CD4-positive, alpha-beta T cell (primary cell): ENCODE measurements at regions of chr1 and their contacts with region 1.

Region 1: GRCh38 chr1:45583264-45583665 is 576 bp upstream of the NASP start:
- DNase-seq: peak; percentile 88 to 98 (median 92)
- ATAC-seq: peak; percentile 74
- H3K4me3 ChIP-seq: peak overlapping the region; percentile 95
- H3K4me3 Mint-ChIP-seq: peak overlapping the region; percentile 94
- H3K27ac ChIP-seq: peak overlapping the region; percentile 94 to 95
- H3K27ac Mint-ChIP-seq: peak overlapping the region; percentile 93
- H3K4me1 ChIP-seq: peaks cover 36% of the 10 kb centered on the region
- H3K4me1 Mint-ChIP-seq: peaks cover 36% of the 10 kb centered on the region
- H3K27me3 ChIP-seq: no peaks in the 10 kb centered on the region
- H3K27me3 Mint-ChIP-seq: no peaks in the 10 kb centered on the region
- CTCF ChIP-seq: no peak

Region 2: DNA sequence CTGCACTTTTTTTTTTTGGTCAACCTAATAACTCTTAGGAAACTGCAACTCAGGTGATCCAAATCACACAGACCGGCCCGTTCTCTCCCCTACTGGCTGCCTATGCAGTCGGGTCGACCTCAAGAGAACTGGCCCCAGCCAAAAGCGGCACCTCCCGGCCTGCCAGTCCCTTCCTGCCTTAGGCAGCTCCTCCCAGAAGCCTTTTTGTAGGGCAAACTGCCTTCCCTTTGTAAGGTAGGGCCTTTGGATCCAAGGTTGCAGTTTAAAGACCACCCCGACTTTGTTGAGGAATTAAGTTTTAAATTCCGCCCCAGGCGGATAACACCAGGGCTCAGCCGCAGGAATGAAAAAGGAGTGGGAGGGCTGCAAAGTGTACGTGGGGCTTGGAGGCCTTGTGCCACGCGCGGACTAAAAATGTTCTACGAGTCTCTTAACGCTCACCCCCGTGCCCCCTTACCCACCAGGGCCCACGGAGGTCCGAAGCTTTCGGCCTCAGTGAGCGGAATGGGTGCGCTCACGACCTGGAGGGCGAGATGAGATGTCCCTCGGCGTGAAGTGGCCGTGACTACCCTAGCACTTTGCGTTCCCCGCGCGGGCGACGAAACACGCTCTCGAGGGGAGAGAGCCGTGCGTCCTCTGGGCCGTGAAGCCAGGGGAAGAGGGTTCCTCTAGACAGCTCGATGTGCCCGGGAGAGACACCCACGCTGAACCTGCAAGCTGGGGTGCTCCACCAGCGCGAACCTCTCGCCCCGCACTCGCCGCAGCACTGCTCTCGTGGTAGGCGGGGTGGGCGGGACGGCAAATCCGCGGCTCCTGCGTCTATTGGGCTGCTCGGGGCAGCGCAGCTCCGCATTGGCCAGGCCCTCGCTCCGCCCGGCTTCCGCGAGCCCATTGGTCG is 1876.4 kb before region 1 on chr1:
- CTCF ChIA-PET with region 1: no interaction called
- POLR2A ChIA-PET with region 1: no interaction called
- intact Hi-C with region 1: loop called in 1 of 2 experiments (anchors 10 kb)
- DNase-seq: peak; percentile 82 to 95 (median 88)
- ATAC-seq: peak; percentile 99
- H3K4me3 ChIP-seq: peak overlapping the region; percentile 82
- H3K4me3 Mint-ChIP-seq: peak overlapping the region; percentile 91
- H3K27ac ChIP-seq: peak overlapping the region in 1 of 2 donors; percentile 43
- H3K27ac Mint-ChIP-seq: peak overlapping the region; percentile 73
- H3K4me1 ChIP-seq: peaks cover 19% of the 10 kb centered on the region
- H3K4me1 Mint-ChIP-seq: peaks cover 28% of the 10 kb centered on the region
- H3K27me3 ChIP-seq: no peaks in the 10 kb centered on the region
- H3K27me3 Mint-ChIP-seq: no peaks in the 10 kb centered on the region
- CTCF ChIP-seq: no peak

Region 3: GRCh38 chr1:44730741-44731512 is 852.3 kb before region 1 on chr1 and contains the start of gene RNU5D-1:
- CTCF ChIA-PET with region 1: no interaction called
- POLR2A ChIA-PET with region 1: interaction called, 4 read pairs
- intact Hi-C with region 1: loop called in 1 of 2 experiments (anchors 5 kb)
- DNase-seq: peak; percentile 87 to 98 (median 94)
- ATAC-seq: peak; percentile 76
- H3K4me3 ChIP-seq: peak within 1 kb of the TSS; percentile 46
- H3K4me3 Mint-ChIP-seq: peak within 1 kb of the TSS; percentile 68
- H3K27ac ChIP-seq: peak within 1 kb of the TSS; percentile 93 to 96
- H3K27ac Mint-ChIP-seq: peak within 1 kb of the TSS; percentile 97
- H3K4me1 ChIP-seq: peaks cover 33% of the 10 kb centered on the region
- H3K4me1 Mint-ChIP-seq: peaks cover 35% of the 10 kb centered on the region
- H3K27me3 ChIP-seq: no peaks in the 10 kb centered on the region
- H3K27me3 Mint-ChIP-seq: no peaks in the 10 kb centered on the region
- CTCF ChIP-seq: peak; percentile 77
- total RNA-seq, gene RNU5D-1: not detected

Region 4: GRCh38 chr1:45490626-45491486 is 92.4 kb before region 1 on chr1 and contains the start of gene TESK2:
- CTCF ChIA-PET with region 1: interaction called, 4 read pairs
- POLR2A ChIA-PET with region 1: interaction called, 17 read pairs
- intact Hi-C with region 1: no loop called
- DNase-seq: peak; percentile 92 to 100 (median 95)
- ATAC-seq: peak; percentile 92
- H3K4me3 ChIP-seq: peak within 1 kb of the TSS; percentile 82
- H3K4me3 Mint-ChIP-seq: no peak within 1 kb of the TSS
- H3K27ac ChIP-seq: peak within 1 kb of the TSS; percentile 55 to 70
- H3K27ac Mint-ChIP-seq: no peak within 1 kb of the TSS
- H3K4me1 ChIP-seq: peaks cover 28% of the 10 kb centered on the region
- H3K4me1 Mint-ChIP-seq: peaks cover 5% of the 10 kb centered on the region
- H3K27me3 ChIP-seq: no peaks in the 10 kb centered on the region
- H3K27me3 Mint-ChIP-seq: no peaks in the 10 kb centered on the region
- CTCF ChIP-seq: no peak
- total RNA-seq, gene TESK2: 2.8 to 3.4 TPM

Region 5: DNA sequence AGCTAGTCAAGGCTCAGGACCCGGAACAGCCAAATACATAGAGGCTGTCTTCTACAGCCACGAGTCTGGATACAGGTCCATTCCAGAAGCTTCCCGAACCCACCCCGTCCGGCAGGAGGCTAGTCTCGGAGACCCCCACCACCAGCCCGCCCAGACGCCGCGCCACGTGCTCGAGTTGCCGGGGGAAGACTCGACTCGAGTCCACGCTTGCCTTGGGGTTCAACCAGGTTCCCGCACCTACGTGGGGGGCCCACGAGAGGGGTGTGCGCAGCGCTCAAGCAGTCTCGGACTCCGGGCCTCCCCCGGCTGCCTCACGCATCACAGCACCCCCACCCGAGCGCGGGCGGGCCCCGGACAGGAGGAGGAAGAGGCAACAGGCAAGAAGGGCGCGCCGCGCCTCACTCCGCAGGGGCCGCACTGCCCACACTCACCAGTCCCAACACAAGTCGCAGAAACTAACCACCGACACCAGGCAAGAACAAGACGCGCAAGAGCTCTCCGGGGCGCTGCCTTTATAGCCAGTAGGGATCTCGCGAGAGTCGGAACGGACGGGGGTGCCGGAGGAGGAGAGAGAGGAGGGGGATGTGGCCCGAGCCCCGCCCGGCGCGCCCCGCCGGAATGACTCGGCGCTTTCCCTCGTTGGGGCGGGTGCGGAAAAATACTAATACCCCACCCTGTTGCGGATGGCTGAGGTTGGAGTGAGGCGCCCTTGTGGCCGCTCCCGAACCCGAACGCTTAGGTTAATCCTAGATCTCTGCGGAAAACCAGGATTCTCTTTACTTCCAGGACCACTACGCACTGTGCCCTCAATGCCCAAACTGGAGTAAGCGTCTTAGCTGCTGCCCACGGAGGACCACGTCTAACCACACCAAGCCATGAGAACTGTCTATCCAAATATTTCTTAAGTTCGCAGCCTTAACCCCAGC is 61.6 kb before region 1 on chr1 and contains the start of gene PRDX1:
- CTCF ChIA-PET with region 1: interaction called, 4 read pairs
- POLR2A ChIA-PET with region 1: interaction called, 23 read pairs
- intact Hi-C with region 1: loop called in 1 of 2 experiments (anchors 2 kb)
- DNase-seq: peak; percentile 93 to 97 (median 96)
- ATAC-seq: peak; percentile 90
- H3K4me3 ChIP-seq: peak within 1 kb of the TSS; percentile 90
- H3K4me3 Mint-ChIP-seq: peak within 1 kb of the TSS; percentile 97
- H3K27ac ChIP-seq: peak within 1 kb of the TSS; percentile 61 to 65
- H3K27ac Mint-ChIP-seq: peak within 1 kb of the TSS; percentile 86
- H3K4me1 ChIP-seq: peaks cover 36% of the 10 kb centered on the region
- H3K4me1 Mint-ChIP-seq: peaks cover 30% of the 10 kb centered on the region
- H3K27me3 ChIP-seq: no peaks in the 10 kb centered on the region
- H3K27me3 Mint-ChIP-seq: no peaks in the 10 kb centered on the region
- CTCF ChIP-seq: no peak
- total RNA-seq, gene PRDX1: 18.1 to 24.1 TPM

Region 6: DNA sequence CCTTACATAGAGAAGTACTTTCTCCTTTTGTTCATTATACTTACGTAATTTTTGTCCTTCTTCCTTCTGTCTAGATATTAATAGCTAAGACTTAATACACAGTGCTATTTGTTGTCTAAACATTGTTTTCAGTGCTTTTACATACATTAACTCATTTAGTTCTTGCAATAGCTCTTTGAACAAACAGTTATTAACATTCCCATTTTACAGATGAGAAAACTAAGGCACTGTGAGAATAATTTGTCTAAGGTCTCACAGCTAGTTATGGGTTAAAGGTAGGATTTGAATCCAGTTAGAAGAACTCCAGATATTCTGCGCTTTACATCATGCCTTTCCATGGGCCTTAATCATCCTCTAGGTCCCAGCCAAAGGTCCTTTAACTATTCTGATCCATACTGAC is 21.0 kb after region 1 on chr1:
- CTCF ChIA-PET with region 1: interaction called, 3 read pairs
- POLR2A ChIA-PET with region 1: no interaction called
- intact Hi-C with region 1: loop called in 1 of 2 experiments (anchors 2 kb)
- DNase-seq: no peak
- ATAC-seq: no peak
- H3K4me3 ChIP-seq: no peak overlapping the region
- H3K4me3 Mint-ChIP-seq: no peak overlapping the region
- H3K27ac ChIP-seq: no peak overlapping the region
- H3K27ac Mint-ChIP-seq: peak overlapping the region; percentile 42
- H3K4me1 ChIP-seq: peaks cover 3% of the 10 kb centered on the region
- H3K4me1 Mint-ChIP-seq: peaks cover 60% of the 10 kb centered on the region
- H3K27me3 ChIP-seq: no peaks in the 10 kb centered on the region
- H3K27me3 Mint-ChIP-seq: no peaks in the 10 kb centered on the region
- CTCF ChIP-seq: no peak

Region 7: DNA sequence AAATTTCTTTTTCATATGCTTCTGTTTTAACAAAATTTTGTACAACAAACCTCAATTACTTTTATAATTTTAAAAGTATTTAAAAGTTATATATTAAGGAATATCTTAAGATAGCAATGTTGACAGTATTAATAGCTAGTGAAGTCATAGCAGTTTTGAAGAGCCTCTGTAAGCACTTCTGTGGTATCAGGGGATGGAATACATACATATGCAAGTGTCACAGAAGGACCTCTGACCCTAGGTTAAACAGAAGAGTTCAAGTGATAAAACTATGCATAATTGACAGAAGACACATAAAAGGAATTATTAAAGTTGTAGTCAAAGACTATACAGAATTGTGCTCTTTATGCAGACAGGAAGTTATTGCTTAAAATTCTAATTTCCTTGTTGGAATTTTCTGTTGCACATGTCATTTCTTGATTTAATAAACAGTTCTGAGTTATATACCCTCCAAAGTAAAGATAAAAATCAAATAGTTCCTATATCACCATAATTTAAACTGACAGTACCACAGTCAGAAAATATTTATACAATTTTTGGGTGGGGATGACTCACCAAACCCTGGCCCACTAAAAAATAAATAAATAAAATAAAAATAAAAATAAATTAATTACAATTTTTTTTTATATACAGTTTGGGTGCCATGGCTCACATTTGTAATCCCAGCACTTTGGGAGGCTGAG is 140.1 kb after region 1 on chr1:
- CTCF ChIA-PET with region 1: no interaction called
- POLR2A ChIA-PET with region 1: no interaction called
- intact Hi-C with region 1: no loop called
- DNase-seq: no peak
- ATAC-seq: no peak
- H3K4me3 ChIP-seq: no peak overlapping the region
- H3K4me3 Mint-ChIP-seq: no peak overlapping the region
- H3K27ac ChIP-seq: no peak overlapping the region
- H3K27ac Mint-ChIP-seq: no peak overlapping the region
- H3K4me1 ChIP-seq: no peaks in the 10 kb centered on the region
- H3K4me1 Mint-ChIP-seq: no peaks in the 10 kb centered on the region
- H3K27me3 ChIP-seq: no peaks in the 10 kb centered on the region
- H3K27me3 Mint-ChIP-seq: no peaks in the 10 kb centered on the region
- CTCF ChIP-seq: no peak

Region 8: DNA sequence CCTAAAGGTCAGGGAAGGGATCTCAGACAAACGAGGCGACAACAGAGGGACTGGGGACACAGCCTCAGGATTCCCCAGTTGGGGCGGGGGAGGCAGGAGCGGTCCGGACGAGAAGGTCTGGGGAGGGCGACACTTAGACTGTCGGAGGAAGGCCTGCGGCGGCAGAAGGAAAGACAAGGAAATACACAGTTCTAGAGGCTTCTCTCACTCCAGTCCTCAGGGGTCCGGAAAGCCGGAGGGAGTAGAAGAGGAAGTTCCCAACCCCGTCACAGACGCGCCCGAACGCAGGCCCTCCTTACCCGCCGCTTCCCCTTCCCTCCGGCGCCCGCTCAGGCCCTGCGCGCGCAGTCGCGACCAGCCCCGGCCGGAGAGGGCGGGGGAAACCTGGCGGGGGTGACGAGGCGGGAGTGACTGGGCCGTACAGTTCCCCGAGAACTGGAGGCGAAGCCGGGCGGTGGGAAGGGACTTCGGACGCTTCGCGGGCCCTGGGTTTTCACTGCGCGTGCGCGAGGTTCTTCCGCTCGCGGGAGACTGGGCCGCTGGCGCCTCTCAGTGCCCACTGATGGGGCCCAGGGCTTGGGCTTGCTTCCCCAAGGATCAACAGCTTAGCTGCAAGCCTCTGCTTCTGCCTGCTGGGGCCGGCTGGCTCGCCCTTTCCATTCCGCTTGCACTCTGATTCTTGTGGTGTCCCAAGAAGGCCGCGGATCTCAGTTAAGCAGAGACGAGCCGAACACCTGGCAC is 167.2 kb after region 1 on chr1 and contains the start of gene IPP:
- CTCF ChIA-PET with region 1: no interaction called
- POLR2A ChIA-PET with region 1: no interaction called
- intact Hi-C with region 1: loop called in 1 of 2 experiments (anchors 5 kb)
- DNase-seq: peak; percentile 76 to 97 (median 87)
- ATAC-seq: peak; percentile 84
- H3K4me3 ChIP-seq: peak within 1 kb of the TSS; percentile 67
- H3K4me3 Mint-ChIP-seq: peak within 1 kb of the TSS; percentile 91
- H3K27ac ChIP-seq: peak within 1 kb of the TSS; percentile 92 to 94
- H3K27ac Mint-ChIP-seq: peak within 1 kb of the TSS; percentile 97
- H3K4me1 ChIP-seq: peaks cover 26% of the 10 kb centered on the region
- H3K4me1 Mint-ChIP-seq: peaks cover 43% of the 10 kb centered on the region
- H3K27me3 ChIP-seq: no peaks in the 10 kb centered on the region
- H3K27me3 Mint-ChIP-seq: no peaks in the 10 kb centered on the region
- CTCF ChIP-seq: peak; percentile 42
- total RNA-seq, gene IPP: 6.0 to 6.6 TPM